HepG2 (cell line): ENCODE measurements at regions of chr16 and their contacts with region 1.

Region 1: GRCh38 chr16:66872943-66873684 is 7.2 kb upstream of the PDP2 start:
- DNase-seq: peak; percentile 77
- ATAC-seq: peak; percentile 92
- H3K4me3 ChIP-seq: peak overlapping the region; percentile 18 to 66 (median 41)
- H3K27ac ChIP-seq: no peak overlapping the region
- H3K4me1 ChIP-seq: peaks cover 35% of the 10 kb centered on the region
- H3K27me3 ChIP-seq: peaks cover 0 to 8% of the 10 kb centered on the region in 2 experiments; a peak in 2 of 5 replicates
- CTCF ChIP-seq: peak; percentile 99
- EP300 ChIP-seq: no peak
- POLR2A ChIP-seq: no peak
- RAD21 ChIP-seq: peak; percentile 74

Region 2: DNA sequence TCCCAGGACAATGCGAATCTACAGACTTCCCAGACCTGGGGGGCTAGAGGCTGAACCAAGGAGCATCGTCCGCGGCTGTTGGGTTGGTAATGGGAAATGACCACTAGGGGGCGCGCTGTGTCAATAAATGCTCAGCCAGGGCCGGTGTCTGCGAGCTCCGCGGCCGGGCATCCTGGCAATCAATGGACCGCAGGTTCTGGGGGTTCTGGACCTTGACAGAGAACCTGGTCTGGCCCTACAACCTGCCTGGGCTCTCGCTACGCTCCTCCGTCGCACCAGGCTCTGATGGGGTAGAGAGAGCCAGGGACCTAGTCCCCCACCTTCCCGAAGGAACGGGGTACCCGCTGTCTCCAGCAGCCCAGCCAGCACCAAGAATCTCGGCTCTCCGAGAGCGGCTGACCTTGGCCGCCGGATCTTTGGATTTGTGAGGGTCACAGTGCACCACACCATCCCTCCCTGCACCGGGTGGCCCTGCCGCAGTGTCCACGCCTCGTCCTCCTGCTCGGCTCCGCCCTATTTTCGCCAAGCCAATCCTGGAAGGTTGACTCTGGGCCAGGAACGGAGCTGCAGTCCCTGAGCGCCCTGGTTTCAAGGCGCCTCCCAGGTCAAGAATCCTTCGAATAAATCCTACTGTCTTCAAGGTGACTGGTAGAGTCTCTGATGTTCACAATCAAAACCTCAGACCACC is 466.4 kb before region 1 on chr16:
- CTCF ChIA-PET with region 1: no interaction called
- POLR2A ChIA-PET with region 1: no interaction called
- in situ Hi-C with region 1: loop called (anchors 25 kb)
- intact Hi-C with region 1: no loop called
- DNase-seq: peak; percentile 73
- ATAC-seq: peak; percentile 84
- H3K4me3 ChIP-seq: peak overlapping the region; percentile 47 to 76 (median 50)
- H3K27ac ChIP-seq: peak overlapping the region; percentile 94
- H3K4me1 ChIP-seq: peaks cover 50% of the 10 kb centered on the region
- H3K27me3 ChIP-seq: no peaks in the 10 kb centered on the region
- CTCF ChIP-seq: peak; percentile 99
- EP300 ChIP-seq: no peak; a peak in 1 of 4 replicates
- POLR2A ChIP-seq: 0 out of 4 replicates have a peak, but pooled peaks of 1 of the 2 experiments have one; percentile 44
- RAD21 ChIP-seq: peak; percentile 99

Region 3: DNA sequence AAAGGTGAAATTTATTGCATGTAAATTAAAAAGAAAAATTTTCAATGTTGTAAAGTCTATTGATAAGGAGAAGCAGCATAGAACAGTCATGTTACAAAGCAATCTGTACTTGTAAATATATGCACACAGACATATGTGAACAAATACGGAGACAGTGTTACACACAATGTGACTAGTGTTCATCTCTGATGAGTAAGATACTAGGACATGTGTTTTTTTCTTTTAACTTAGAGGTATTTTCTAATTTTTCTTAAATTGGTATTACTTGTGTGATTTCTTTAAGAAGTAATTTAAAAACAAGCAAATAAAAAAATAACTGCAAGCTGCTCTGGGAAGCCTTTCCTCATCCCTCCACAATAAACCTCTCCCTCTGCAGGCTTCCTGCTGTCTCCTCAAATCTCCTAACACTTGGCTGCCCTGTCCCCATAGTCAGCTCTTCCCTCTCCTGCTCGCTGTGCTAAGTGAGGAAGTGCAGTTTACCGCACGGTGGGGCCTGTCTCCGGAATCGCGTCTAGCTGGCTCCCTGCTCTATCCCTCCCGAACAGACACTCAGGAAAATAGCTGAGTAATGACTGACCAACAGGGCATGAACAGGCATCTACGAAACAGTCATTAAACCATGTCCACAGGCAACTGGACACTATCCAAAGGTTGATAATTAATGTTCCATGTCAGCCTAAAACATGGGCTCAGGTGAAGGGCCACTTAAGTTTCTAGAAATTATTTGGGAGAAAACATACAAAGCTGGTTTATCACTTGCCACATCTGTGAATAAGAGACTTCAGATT is 212.5 kb before region 1 on chr16:
- CTCF ChIA-PET with region 1: interaction called, 5 read pairs
- POLR2A ChIA-PET with region 1: no interaction called
- in situ Hi-C with region 1: no loop called
- intact Hi-C with region 1: loop called (anchors 5 kb)
- DNase-seq: peak; percentile 84
- ATAC-seq: peak; percentile 98
- H3K4me3 ChIP-seq: peak overlapping the region in 2 of 3 experiments; percentile 0 to 23; a peak in 2 of 6 replicates
- H3K27ac ChIP-seq: peak overlapping the region; percentile 39
- H3K4me1 ChIP-seq: peaks cover 37% of the 10 kb centered on the region
- H3K27me3 ChIP-seq: no peaks in the 10 kb centered on the region
- CTCF ChIP-seq: peak; percentile 77
- EP300 ChIP-seq: no peak
- POLR2A ChIP-seq: no peak
- RAD21 ChIP-seq: no peak

Region 4: DNA sequence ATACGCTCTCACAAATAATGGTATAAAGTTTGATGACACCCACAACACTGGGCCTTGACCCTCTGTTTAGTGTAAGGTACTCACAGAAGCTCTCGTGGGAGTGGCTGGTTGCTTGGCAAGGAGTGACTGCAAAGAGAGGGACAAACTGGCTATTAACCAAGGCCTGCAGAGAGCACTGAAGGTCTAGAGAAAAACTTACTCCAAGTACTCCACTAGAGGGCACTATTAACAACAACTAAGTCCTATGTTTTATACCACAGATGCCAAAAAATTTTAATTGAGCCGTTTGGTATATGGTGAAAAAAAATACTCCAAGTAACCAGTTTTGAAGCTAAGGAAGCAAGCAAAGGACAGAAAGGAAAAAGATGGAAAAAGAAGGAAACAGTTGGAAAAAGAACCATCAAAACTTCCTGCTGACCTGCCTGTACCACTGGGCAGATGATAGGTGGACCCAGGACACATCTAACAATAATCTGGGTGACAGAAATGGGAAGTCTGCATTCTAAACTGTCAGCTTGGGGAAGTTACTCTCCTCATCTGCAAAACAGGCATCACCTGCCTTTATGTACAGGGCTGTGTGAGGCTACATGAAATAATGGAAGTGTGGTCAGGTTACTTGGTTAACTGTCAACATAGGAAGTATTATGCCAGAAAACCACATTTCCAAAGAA is 144.9 kb before region 1 on chr16:
- CTCF ChIA-PET with region 1: interaction called, 8 read pairs
- POLR2A ChIA-PET with region 1: no interaction called
- in situ Hi-C with region 1: no loop called
- intact Hi-C with region 1: loop called (anchors 1 kb)
- DNase-seq: peak; percentile 60
- ATAC-seq: peak; percentile 84
- H3K4me3 ChIP-seq: no peak overlapping the region
- H3K27ac ChIP-seq: no peak overlapping the region
- H3K4me1 ChIP-seq: no peaks in the 10 kb centered on the region
- H3K27me3 ChIP-seq: no peaks in the 10 kb centered on the region
- CTCF ChIP-seq: peak; percentile 64
- EP300 ChIP-seq: no peak
- POLR2A ChIP-seq: no peak
- RAD21 ChIP-seq: no peak

Region 5: GRCh38 chr16:66801320-66802105 is 71.6 kb before region 1 on chr16 and contains the start of gene TERB1:
- CTCF ChIA-PET with region 1: no interaction called
- POLR2A ChIA-PET with region 1: no interaction called
- in situ Hi-C with region 1: no loop called
- intact Hi-C with region 1: no loop called
- DNase-seq: no peak
- ATAC-seq: peak; percentile 51
- H3K4me3 ChIP-seq: no peak within 1 kb of the TSS
- H3K27ac ChIP-seq: no peak within 1 kb of the TSS
- H3K4me1 ChIP-seq: no peaks in the 10 kb centered on the region
- H3K27me3 ChIP-seq: no peaks in the 10 kb centered on the region
- CTCF ChIP-seq: no peak
- EP300 ChIP-seq: no peak
- POLR2A ChIP-seq: no peak; a peak in 1 of 4 replicates
- RAD21 ChIP-seq: no peak
- total RNA-seq, gene TERB1: not detected in 2 replicates

Region 6: GRCh38 chr16:66830422-66831404 is 42.4 kb before region 1 on chr16 and contains the start of gene NAE1:
- CTCF ChIA-PET with region 1: interaction called, 17 read pairs
- POLR2A ChIA-PET with region 1: interaction called, 13 read pairs
- in situ Hi-C with region 1: no loop called
- intact Hi-C with region 1: loop called (anchors 2 kb)
- DNase-seq: peak; percentile 81
- ATAC-seq: peak; percentile 95
- H3K4me3 ChIP-seq: peak within 1 kb of the TSS; percentile 85 to 93 (median 89)
- H3K27ac ChIP-seq: peak within 1 kb of the TSS; percentile 88
- H3K4me1 ChIP-seq: peaks cover 48% of the 10 kb centered on the region
- H3K27me3 ChIP-seq: peaks cover 0 to 18% of the 10 kb centered on the region in 2 experiments; a peak in 3 of 5 replicates
- CTCF ChIP-seq: peak; percentile 99
- EP300 ChIP-seq: no peak
- POLR2A ChIP-seq: peak; percentile 91 to 97
- RAD21 ChIP-seq: peak; percentile 83
- total RNA-seq, gene NAE1: 206 and 279 TPM in 2 replicates

Region 7: GRCh38 chr16:67170168-67170947 is 297.2 kb after region 1 on chr16 and contains the start of gene NOL3:
- CTCF ChIA-PET with region 1: no interaction called
- POLR2A ChIA-PET with region 1: no interaction called
- in situ Hi-C with region 1: no loop called
- intact Hi-C with region 1: no loop called
- DNase-seq: peak; percentile 87
- ATAC-seq: peak; percentile 58
- H3K4me3 ChIP-seq: peak within 1 kb of the TSS; percentile 65 to 78 (median 67)
- H3K27ac ChIP-seq: peak within 1 kb of the TSS; percentile 71
- H3K4me1 ChIP-seq: peaks cover 63% of the 10 kb centered on the region
- H3K27me3 ChIP-seq: peaks cover 4 to 34% of the 10 kb centered on the region in 2 experiments
- CTCF ChIP-seq: peak; percentile 63
- EP300 ChIP-seq: peak in 1 of 2 experiments; percentile 30; a peak in 1 of 4 replicates
- POLR2A ChIP-seq: peak in 1 of 2 experiments; percentile 45; a peak in 1 of 4 replicates
- RAD21 ChIP-seq: peak; percentile 13; the same call in 1 of the 2 replicates
- total RNA-seq, gene NOL3: 3.1 and 5.7 TPM in 2 replicates